Caco-2 (cell line): ENCODE measurements at regions of chr18 and their contacts with region 1.

Region 1: GRCh38 chr18:32289483-32290075 is 99.7 kb downstream of the MEP1B start:
- DNase-seq: peak; percentile 30 to 55
- H3K4me3 ChIP-seq: no peak overlapping the region
- H3K4me3 Mint-ChIP-seq: no peak overlapping the region
- H3K27ac Mint-ChIP-seq: no peak overlapping the region
- H3K4me1 ChIP-seq: no peaks in the 10 kb centered on the region
- H3K4me1 Mint-ChIP-seq: no peaks in the 10 kb centered on the region
- H3K27me3 ChIP-seq: no peaks in the 10 kb centered on the region
- H3K27me3 Mint-ChIP-seq: no peaks in the 10 kb centered on the region
- CTCF ChIP-seq: peak in 1 of 2 experiments; percentile 58

Region 2: DNA sequence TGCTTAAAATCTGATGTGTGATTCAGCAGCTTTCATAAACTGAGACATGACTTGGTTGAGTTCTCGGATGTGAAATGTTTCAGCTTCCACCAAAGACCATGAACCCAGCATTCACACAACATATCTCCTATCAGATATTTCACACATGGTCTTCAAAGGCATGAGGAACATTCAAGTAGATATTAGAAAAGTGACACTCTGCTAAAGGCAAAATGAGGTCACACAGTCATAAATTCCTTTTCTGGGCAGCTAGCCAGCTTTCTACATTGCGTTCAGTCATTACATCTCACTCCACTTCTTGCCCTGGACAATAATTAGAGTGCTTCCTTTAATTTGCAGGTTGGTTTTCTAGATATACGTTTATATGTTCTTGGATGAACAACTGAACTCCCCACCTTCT is 84.4 kb after region 1 on chr18:
- CTCF ChIA-PET with region 1: no interaction called
- POLR2A ChIA-PET with region 1: no interaction called
- intact Hi-C with region 1: loop called (anchors 10 kb)
- DNase-seq: no peak
- H3K4me3 ChIP-seq: no peak overlapping the region
- H3K4me3 Mint-ChIP-seq: no peak overlapping the region
- H3K27ac Mint-ChIP-seq: no peak overlapping the region
- H3K4me1 ChIP-seq: peaks cover 19% of the 10 kb centered on the region
- H3K4me1 Mint-ChIP-seq: peaks cover 8% of the 10 kb centered on the region
- H3K27me3 ChIP-seq: no peaks in the 10 kb centered on the region
- H3K27me3 Mint-ChIP-seq: no peaks in the 10 kb centered on the region
- CTCF ChIP-seq: no peak

Region 3: GRCh38 chr18:32470713-32471633 is 181.4 kb after region 1 on chr18 and contains the start of gene GAREM1:
- CTCF ChIA-PET with region 1: interaction called, 22 read pairs
- POLR2A ChIA-PET with region 1: interaction called, 10 read pairs
- intact Hi-C with region 1: loop called (anchors 2 kb)
- DNase-seq: peak; percentile 85
- H3K4me3 ChIP-seq: peak within 1 kb of the TSS; percentile 44
- H3K4me3 Mint-ChIP-seq: peak within 1 kb of the TSS; percentile 81
- H3K27ac Mint-ChIP-seq: no peak within 1 kb of the TSS
- H3K4me1 ChIP-seq: no peaks in the 10 kb centered on the region
- H3K4me1 Mint-ChIP-seq: no peaks in the 10 kb centered on the region
- H3K27me3 ChIP-seq: no peaks in the 10 kb centered on the region
- H3K27me3 Mint-ChIP-seq: peaks cover 4% of the 10 kb centered on the region
- CTCF ChIP-seq: peak in 1 of 2 experiments; percentile 48
- total RNA-seq, gene GAREM1: 0.50 and 0.51 TPM in 2 replicates

Region 4: GRCh38 chr18:32552421-32553030 is 262.9 kb after region 1 on chr18:
- CTCF ChIA-PET with region 1: interaction called, 3 read pairs
- POLR2A ChIA-PET with region 1: no interaction called
- intact Hi-C with region 1: loop called (anchors 5 kb)
- DNase-seq: peak; percentile 43 to 46
- H3K4me3 ChIP-seq: no peak overlapping the region
- H3K4me3 Mint-ChIP-seq: no peak overlapping the region
- H3K27ac Mint-ChIP-seq: no peak overlapping the region
- H3K4me1 ChIP-seq: no peaks in the 10 kb centered on the region
- H3K4me1 Mint-ChIP-seq: no peaks in the 10 kb centered on the region
- H3K27me3 ChIP-seq: no peaks in the 10 kb centered on the region
- H3K27me3 Mint-ChIP-seq: no peaks in the 10 kb centered on the region
- CTCF ChIP-seq: peak; percentile 40 to 51